ENCODE measurements at regions of chr17 and their contacts with region 1.

Region 1: DNA sequence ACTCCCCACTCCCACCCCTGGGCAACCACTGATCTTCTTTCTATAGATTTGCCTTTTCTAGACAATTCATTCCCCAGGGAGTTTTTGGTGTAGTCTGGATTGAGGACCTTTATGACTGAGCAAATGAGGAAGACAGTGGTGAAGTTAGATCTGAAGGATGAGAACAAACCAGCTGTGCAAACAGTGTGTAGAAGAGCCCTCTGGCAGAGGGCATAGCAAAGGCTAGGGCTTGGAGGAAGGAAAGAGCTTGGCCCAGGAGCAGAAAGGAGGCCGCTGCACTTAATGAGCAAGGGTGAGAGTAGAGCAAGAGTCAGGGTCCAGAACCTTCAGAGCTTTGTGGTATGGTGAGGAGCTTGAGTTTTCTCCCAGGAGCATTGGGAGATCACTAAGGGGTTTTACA is 352.7 kb downstream of the CA10 start:
- DNase-seq: no peak
- H3K4me3 ChIP-seq: no peak overlapping the region
- H3K27ac ChIP-seq: no peak overlapping the region
- H3K4me1 ChIP-seq: no peaks in the 10 kb centered on the region
- H3K27me3 ChIP-seq: peaks cover 0 to 4% of the 10 kb centered on the region in 2 donors
- CTCF ChIP-seq: no peak
- POLR2A ChIP-seq: no peak

Region 2: DNA sequence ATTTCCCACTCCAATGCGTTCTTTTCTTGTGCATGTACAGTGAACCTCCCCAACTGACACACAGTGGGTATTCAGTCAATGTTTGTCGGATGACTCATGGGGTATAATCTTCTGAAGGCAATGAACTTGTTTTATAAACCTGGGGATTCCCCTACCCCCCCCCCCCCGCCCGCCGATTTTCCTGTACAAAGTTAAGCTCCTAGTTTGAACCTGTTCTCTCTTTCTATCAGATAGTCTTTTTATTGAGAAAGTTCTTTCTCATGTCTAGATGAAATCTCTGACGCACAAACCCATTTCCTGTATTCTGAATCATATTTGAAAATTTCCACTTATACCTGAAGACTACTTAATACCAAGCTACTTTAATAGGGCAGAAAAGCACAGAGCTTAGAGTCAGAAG is 14.5 kb after region 1 on chr17:
- intact Hi-C with region 1: loop called (anchors 2 kb)
- DNase-seq: no peak
- H3K4me3 ChIP-seq: no peak overlapping the region
- H3K27ac ChIP-seq: no peak overlapping the region
- H3K4me1 ChIP-seq: no peaks in the 10 kb centered on the region
- H3K27me3 ChIP-seq: no peaks in the 10 kb centered on the region
- CTCF ChIP-seq: no peak
- POLR2A ChIP-seq: no peak

Region 3: DNA sequence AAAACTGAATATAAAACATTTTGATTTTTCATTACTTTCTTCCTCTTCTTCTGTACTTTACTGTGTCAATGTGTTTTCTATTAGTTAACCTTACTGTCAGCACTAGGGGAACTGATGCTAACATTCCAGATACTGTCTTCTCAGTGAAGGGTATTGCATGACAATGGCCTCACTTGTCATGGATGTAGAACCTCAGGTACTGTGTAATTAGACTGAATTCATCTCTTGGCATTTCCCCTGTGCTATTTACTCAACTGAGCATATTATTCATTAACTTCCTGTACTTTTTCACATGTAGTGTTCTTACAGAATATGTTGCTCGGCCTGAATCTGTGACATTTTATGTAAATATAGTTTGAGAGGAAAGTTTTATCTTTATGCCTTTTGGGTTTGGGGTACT is 115.7 kb after region 1 on chr17:
- intact Hi-C with region 1: loop called (anchors 5 kb)
- DNase-seq: no peak
- H3K4me3 ChIP-seq: no peak overlapping the region
- H3K27ac ChIP-seq: no peak overlapping the region
- H3K4me1 ChIP-seq: no peaks in the 10 kb centered on the region
- H3K27me3 ChIP-seq: peaks cover 0 to 10% of the 10 kb centered on the region in 2 donors
- CTCF ChIP-seq: no peak
- POLR2A ChIP-seq: no peak

Region 4: GRCh38 chr17:52357855-52358254 is 552.1 kb after region 1 on chr17:
- intact Hi-C with region 1: no loop called
- DNase-seq: no peak
- H3K4me3 ChIP-seq: no peak overlapping the region
- H3K27ac ChIP-seq: no peak overlapping the region
- H3K4me1 ChIP-seq: no peaks in the 10 kb centered on the region
- H3K27me3 ChIP-seq: no peaks in the 10 kb centered on the region
- CTCF ChIP-seq: no peak
- POLR2A ChIP-seq: no peak

Measured in breast epithelium (tissue), 4 donors.